Calu3 (cell line): ENCODE measurements at regions of chr17 and their contacts with region 1.

Region 1: DNA sequence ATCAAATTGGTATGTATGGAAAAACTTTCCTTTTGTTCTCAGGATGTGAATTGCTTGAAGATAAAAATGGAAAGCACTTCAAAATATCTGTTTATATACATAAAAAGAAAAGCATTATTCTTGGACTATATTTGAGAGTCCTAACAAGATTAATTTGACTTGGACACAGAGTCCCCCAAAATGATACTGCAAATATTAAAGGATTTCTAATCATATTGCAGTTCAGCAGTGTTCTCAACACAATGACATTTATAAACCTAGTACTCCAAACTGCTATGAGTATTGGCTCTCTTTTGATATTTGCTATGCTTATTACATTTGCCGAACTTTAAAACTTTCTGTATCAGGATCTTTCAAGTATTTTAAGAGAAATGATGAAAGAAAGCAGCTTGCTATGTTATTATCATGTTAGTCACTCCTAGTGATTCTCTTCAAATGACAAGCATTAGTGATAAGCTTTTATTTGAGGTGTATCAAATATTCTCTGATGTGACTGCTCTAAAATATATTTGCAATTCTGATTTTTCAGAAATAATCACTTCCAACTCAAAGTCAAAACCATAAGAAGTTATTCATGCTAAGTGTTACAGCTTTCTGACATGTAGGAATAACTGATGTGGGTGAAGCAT is 166.8 kb downstream of the TRIM37 start:
- DNase-seq: no peak
- H3K4me3 Mint-ChIP-seq: no peak overlapping the region
- H3K27ac Mint-ChIP-seq: no peak overlapping the region
- H3K4me1 Mint-ChIP-seq: no peaks in the 10 kb centered on the region
- H3K27me3 Mint-ChIP-seq: no peaks in the 10 kb centered on the region
- CTCF ChIP-seq: no peak

Region 2: GRCh38 chr17:58969156-58969555 is 29.3 kb after region 1 on chr17:
- CTCF ChIA-PET with region 1: interaction called, 10 read pairs
- intact Hi-C with region 1: no loop called
- DNase-seq: no peak
- H3K4me3 Mint-ChIP-seq: no peak overlapping the region
- H3K27ac Mint-ChIP-seq: no peak overlapping the region
- H3K4me1 Mint-ChIP-seq: no peaks in the 10 kb centered on the region
- H3K27me3 Mint-ChIP-seq: no peaks in the 10 kb centered on the region
- CTCF ChIP-seq: no peak